ENCODE measurements at regions of chr2 and their contacts with region 1.

Region 1: GRCh38 chr2:126776692-126777619 is 121.0 kb downstream of the GYPC start:
- DNase-seq: peak; percentile 86
- H3K4me3 ChIP-seq: peak overlapping the region; percentile 46 to 53
- H3K27ac ChIP-seq: no peak overlapping the region
- H3K4me1 ChIP-seq: peaks cover 0 to 18% of the 10 kb centered on the region in 2 experiments; a peak in 1 of 4 replicates
- H3K27me3 ChIP-seq: no peaks in the 10 kb centered on the region
- CTCF ChIP-seq: peak; percentile 70
- EP300 ChIP-seq: no peak
- RAD21 ChIP-seq: peak; percentile 94

Region 2: GRCh38 chr2:126527836-126528507 is 249.0 kb before region 1 on chr2:
- CTCF ChIA-PET with region 1: interaction called, 28 read pairs
- POLR2A ChIA-PET with region 1: no interaction called
- DNase-seq: peak; percentile 38
- H3K4me3 ChIP-seq: no peak overlapping the region
- H3K27ac ChIP-seq: no peak overlapping the region
- H3K4me1 ChIP-seq: no peaks in the 10 kb centered on the region
- H3K27me3 ChIP-seq: no peaks in the 10 kb centered on the region
- CTCF ChIP-seq: peak; percentile 21; the same call in 1 of the 2 replicates
- EP300 ChIP-seq: no peak
- RAD21 ChIP-seq: peak; percentile 59

Region 3: DNA sequence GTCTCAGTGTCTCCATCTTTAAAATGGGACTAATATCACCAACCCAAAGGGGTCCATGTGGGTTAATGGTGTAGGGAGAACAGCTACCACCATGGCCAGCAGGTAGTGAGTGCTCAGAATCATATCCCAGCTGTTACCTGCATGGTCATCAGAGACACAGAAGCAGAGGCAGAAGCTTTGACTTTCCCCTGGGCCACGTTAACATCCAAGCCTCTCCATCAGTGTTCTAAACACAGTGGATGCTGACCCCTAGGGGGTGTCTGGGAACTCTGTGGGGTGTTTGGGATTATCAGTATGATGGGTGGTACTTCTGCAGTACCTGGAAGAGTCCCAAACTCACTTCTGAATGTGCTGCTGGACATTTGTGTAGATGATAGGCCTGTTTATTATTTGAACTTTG is 27.4 kb before region 1 on chr2:
- CTCF ChIA-PET with region 1: no interaction called
- POLR2A ChIA-PET with region 1: no interaction called
- DNase-seq: no peak
- H3K4me3 ChIP-seq: no peak overlapping the region
- H3K27ac ChIP-seq: no peak overlapping the region
- H3K4me1 ChIP-seq: no peaks in the 10 kb centered on the region
- H3K27me3 ChIP-seq: no peaks in the 10 kb centered on the region
- CTCF ChIP-seq: no peak
- EP300 ChIP-seq: no peak
- RAD21 ChIP-seq: peak; percentile 27

Region 4: DNA sequence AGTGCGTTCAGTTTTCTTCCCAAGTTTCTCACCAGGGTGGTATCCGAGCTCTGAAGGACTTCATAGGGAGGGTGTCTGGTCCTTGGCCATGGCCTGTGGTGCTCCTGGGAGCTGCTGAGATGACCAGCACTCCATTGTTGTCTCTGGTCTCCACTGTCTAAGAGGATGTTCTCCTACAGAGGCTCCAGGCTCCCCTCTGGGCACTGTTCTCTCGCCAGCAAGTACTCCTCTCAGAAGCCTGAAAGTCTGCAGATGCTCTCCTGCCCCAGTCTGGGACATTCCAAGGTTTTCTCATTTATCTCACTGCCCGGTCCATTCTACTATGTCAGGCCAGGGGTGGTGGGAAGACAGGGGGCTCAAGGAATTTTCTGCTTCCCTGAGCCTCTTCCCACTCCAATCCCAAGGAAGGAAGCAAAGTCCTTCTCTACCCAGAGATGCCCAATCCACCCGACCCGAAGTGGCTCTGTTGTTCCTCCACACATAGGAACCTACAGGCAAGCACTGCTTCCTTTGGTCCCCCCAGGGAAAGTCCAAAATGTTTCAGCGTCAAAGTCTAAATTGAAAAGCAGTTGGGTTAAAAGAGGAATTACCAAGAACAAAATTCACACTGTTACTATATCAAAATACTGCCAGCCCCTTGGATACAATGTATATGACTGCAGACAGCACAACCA is 10.5 kb before region 1 on chr2:
- CTCF ChIA-PET with region 1: interaction called, 13 read pairs
- POLR2A ChIA-PET with region 1: no interaction called
- DNase-seq: no peak
- H3K4me3 ChIP-seq: no peak overlapping the region
- H3K27ac ChIP-seq: no peak overlapping the region
- H3K4me1 ChIP-seq: no peaks in the 10 kb centered on the region
- H3K27me3 ChIP-seq: no peaks in the 10 kb centered on the region
- CTCF ChIP-seq: no peak
- EP300 ChIP-seq: no peak
- RAD21 ChIP-seq: no peak